ENCODE measurements at regions of chr16 and their contacts with region 1.

Region 1: GRCh38 chr16:30395155-30395991 is at the start of gene ZNF48:
- DNase-seq: peak; percentile 56
- ATAC-seq: peak; percentile 79
- H3K4me3 ChIP-seq: peak within 1 kb of the TSS; percentile 84
- H3K27ac ChIP-seq: 0 out of 2 replicates have a peak within 1 kb of the TSS, but pooled peaks have one; percentile 4
- H3K4me1 ChIP-seq: 0 out of 2 replicates have a peak, but pooled peaks cover 4% of the 10 kb centered on the region
- H3K27me3 ChIP-seq: no peaks in the 10 kb centered on the region
- CTCF ChIP-seq: peak; percentile 21; the same call in 1 of the 2 replicates
- total RNA-seq, gene ZNF48: 8.9 and 14.2 TPM in 2 replicates

Region 2: GRCh38 chr16:30355144-30355894 is 40.1 kb before region 1 on chr16 and contains the start of gene CD2BP2:
- CTCF ChIA-PET with region 1: no interaction called
- POLR2A ChIA-PET with region 1: no interaction called
- intact Hi-C with region 1: no loop called
- DNase-seq: peak; percentile 98
- ATAC-seq: peak; percentile 74
- H3K4me3 ChIP-seq: peak within 1 kb of the TSS; percentile 94
- H3K27ac ChIP-seq: peak within 1 kb of the TSS; percentile 88
- H3K4me1 ChIP-seq: peaks cover 33% of the 10 kb centered on the region
- H3K27me3 ChIP-seq: no peaks in the 10 kb centered on the region
- CTCF ChIP-seq: no peak
- total RNA-seq, gene CD2BP2: 30.0 and 43.3 TPM in 2 replicates

Region 3: DNA sequence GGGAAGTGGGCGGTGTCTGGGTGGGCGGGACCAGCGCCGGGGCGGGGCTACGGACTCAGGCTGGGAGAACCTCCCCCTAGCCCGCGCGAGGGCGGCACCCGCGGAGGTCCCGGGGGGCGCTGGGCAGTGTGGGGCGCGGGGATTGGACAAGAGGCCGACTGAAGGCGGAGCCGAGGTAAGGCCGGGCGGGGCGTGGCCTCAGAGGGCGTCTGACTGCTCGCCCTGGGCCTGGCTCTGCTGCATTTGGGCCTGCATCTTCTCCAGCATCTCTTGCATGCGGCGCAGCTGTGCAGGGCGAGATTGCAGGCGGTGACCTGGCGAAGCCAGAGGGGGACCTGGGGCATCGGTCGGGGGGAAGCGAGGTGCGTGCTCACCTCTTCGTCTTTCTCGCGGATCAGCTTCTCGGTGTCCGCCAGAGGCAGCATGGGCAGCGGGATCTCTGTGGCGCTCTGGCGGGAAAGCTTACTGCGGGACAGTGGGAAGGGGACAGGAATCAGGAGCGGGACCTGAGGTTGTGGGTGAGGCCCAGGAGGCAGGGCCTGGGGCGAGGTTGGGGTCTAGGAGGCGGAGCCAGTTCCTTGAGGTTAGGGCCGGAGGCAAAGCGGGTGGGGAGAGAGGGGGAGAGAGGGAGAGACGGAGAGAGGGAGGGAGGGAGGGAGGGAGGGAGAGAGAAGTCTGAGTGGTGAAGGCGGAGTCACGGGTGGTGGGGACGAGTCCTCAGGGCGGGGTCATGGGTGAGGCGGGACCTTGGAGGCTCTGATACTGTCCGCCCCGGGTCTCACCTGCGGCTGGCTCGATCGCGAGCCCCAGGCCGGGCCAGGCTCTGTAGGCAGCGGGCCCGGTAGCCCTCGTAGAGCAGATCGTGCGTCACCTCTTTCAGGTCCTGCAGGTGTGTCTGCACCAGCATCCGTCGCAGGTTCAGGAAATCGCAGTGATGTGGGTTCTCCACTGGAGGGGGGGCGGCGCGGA is 16.9 kb before region 1 on chr16:
- CTCF ChIA-PET with region 1: no interaction called
- POLR2A ChIA-PET with region 1: no interaction called
- intact Hi-C with region 1: loop called (anchors 2 kb)
- DNase-seq: peak; percentile 94
- ATAC-seq: peak; percentile 95
- H3K4me3 ChIP-seq: peak overlapping the region; percentile 86
- H3K27ac ChIP-seq: peak overlapping the region; percentile 93
- H3K4me1 ChIP-seq: peaks cover 5% of the 10 kb centered on the region; the same call in 1 of the 2 replicates
- H3K27me3 ChIP-seq: no peaks in the 10 kb centered on the region
- CTCF ChIP-seq: no peak

Region 4: DNA sequence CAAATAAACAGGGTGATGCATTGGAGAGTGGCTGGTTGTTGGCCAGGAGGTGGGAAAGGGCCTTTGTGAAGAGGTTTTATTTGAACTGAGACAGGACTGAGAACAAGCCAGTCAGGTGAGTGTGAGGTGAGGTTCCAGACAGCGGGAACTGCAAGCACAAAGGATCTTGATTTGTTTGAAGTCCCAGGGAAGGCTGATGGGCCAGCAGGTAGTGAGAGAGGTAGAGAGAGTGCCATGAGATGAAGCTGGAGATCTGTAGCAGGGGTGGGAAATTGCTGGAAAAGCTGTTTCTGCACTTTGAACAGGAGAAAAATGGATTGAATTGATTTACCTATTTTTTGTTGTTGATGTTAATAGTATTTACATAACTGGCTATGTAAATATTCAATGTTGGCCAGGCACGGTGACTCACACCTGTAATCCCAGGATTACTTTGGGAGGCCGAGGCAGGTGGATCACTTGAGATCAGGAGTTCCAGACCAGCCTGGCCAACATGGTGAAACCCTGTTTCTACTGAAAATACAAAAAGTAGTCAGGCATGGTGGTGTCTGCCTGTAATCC is 42.2 kb after region 1 on chr16:
- CTCF ChIA-PET with region 1: no interaction called
- POLR2A ChIA-PET with region 1: no interaction called
- intact Hi-C with region 1: no loop called
- DNase-seq: peak; percentile 56
- ATAC-seq: peak; percentile 84
- H3K4me3 ChIP-seq: no peak overlapping the region
- H3K27ac ChIP-seq: 0 out of 2 replicates have a peak overlapping the region, but pooled peaks have one; percentile 22
- H3K4me1 ChIP-seq: peaks cover 3% of the 10 kb centered on the region; the same call in 1 of the 2 replicates
- H3K27me3 ChIP-seq: no peaks in the 10 kb centered on the region
- CTCF ChIP-seq: no peak

Measured in PC-3 (cell line).